PC-9 (cell line): ENCODE measurements at regions of chrX and their contacts with region 1.

Region 1: GRCh38 chrX:120549483-120550452 is 11.0 kb downstream of the CUL4B start:
- DNase-seq: peak; percentile 58 to 95
- H3K4me3 ChIP-seq: peak overlapping the region; percentile 41
- H3K27ac ChIP-seq: peak overlapping the region; percentile 93
- H3K4me1 ChIP-seq: peaks cover 63% of the 10 kb centered on the region
- H3K27me3 ChIP-seq: no peaks in the 10 kb centered on the region
- CTCF ChIP-seq: no peak

Region 2: DNA sequence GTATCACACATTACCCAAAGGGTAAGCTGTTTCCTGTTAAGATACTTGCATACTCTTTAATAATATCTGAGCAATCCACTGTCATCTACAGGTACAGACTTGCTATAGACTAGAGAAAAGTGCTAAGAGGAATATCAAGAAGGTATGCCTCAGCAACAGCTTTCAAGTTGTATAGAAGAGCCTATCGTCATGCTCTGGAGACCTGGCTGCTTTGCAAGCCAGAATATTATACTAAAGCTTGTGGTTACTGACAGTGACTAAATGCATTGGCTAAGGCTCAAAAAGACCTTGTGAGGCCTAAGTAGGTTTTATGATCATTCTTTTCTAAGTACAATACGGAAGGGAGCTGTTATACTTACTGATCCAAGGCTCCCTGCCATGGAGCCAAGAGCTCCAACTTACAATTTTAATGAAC is 92.0 kb before region 1 on chrX:
- CTCF ChIA-PET with region 1: no interaction called
- POLR2A ChIA-PET with region 1: no interaction called
- intact Hi-C with region 1: no loop called
- DNase-seq: no peak
- H3K4me3 ChIP-seq: no peak overlapping the region
- H3K27ac ChIP-seq: no peak overlapping the region
- H3K4me1 ChIP-seq: no peaks in the 10 kb centered on the region
- H3K27me3 ChIP-seq: no peaks in the 10 kb centered on the region
- CTCF ChIP-seq: no peak

Region 3: GRCh38 chrX:120560842-120561633 is 11.3 kb after region 1 on chrX and contains the start of gene CUL4B:
- CTCF ChIA-PET with region 1: no interaction called
- POLR2A ChIA-PET with region 1: interaction called, 6 read pairs
- intact Hi-C with region 1: loop called (anchors 1 kb)
- DNase-seq: peak; percentile 94 to 95
- H3K4me3 ChIP-seq: peak within 1 kb of the TSS; percentile 92
- H3K27ac ChIP-seq: peak within 1 kb of the TSS; percentile 98
- H3K4me1 ChIP-seq: peaks cover 33% of the 10 kb centered on the region
- H3K27me3 ChIP-seq: no peaks in the 10 kb centered on the region
- CTCF ChIP-seq: 0 out of 2 replicates have a peak, but pooled peaks have one; percentile 24
- total RNA-seq, gene CUL4B: 98.6 and 154 TPM in 2 replicates

Region 4: GRCh38 chrX:120603707-120604360 is 54.1 kb after region 1 on chrX and contains the start of gene MCTS1:
- CTCF ChIA-PET with region 1: no interaction called
- POLR2A ChIA-PET with region 1: interaction called, 10 read pairs
- intact Hi-C with region 1: no loop called
- DNase-seq: peak; percentile 85 to 98
- H3K4me3 ChIP-seq: peak within 1 kb of the TSS; percentile 61
- H3K27ac ChIP-seq: peak within 1 kb of the TSS; percentile 86
- H3K4me1 ChIP-seq: peaks cover 22% of the 10 kb centered on the region
- H3K27me3 ChIP-seq: no peaks in the 10 kb centered on the region
- CTCF ChIP-seq: no peak
- total RNA-seq, gene MCTS1: 90.7 and 98.4 TPM in 2 replicates

Region 5: GRCh38 chrX:120629667-120630537 is 80.1 kb after region 1 on chrX and contains the start of gene C1GALT1C1:
- CTCF ChIA-PET with region 1: no interaction called
- POLR2A ChIA-PET with region 1: no interaction called
- intact Hi-C with region 1: loop called (anchors 2 kb)
- DNase-seq: peak; percentile 92 to 98
- H3K4me3 ChIP-seq: peak within 1 kb of the TSS; percentile 77
- H3K27ac ChIP-seq: peak within 1 kb of the TSS; percentile 87
- H3K4me1 ChIP-seq: peaks cover 23% of the 10 kb centered on the region
- H3K27me3 ChIP-seq: no peaks in the 10 kb centered on the region
- CTCF ChIP-seq: no peak
- total RNA-seq, gene C1GALT1C1: 32.7 and 38.4 TPM in 2 replicates

Region 6: GRCh38 chrX:121333942-121334341 is 784.2 kb after region 1 on chrX:
- CTCF ChIA-PET with region 1: interaction called, 14 read pairs
- POLR2A ChIA-PET with region 1: no interaction called
- intact Hi-C with region 1: no loop called
- DNase-seq: no peak
- H3K4me3 ChIP-seq: no peak overlapping the region
- H3K27ac ChIP-seq: no peak overlapping the region
- H3K4me1 ChIP-seq: peaks cover 13% of the 10 kb centered on the region; the same call in 1 of the 2 replicates
- H3K27me3 ChIP-seq: no peaks in the 10 kb centered on the region
- CTCF ChIP-seq: no peak; the same call in 1 of the 2 replicates